ENCODE measurements at regions of chr14 and their contacts with region 1.

Region 1: GRCh38 chr14:20934148-20934762 is 21.0 kb upstream of the RNASE2 start:
- DNase-seq: no peak
- H3K4me3 ChIP-seq: no peak overlapping the region
- H3K27ac ChIP-seq: no peak overlapping the region
- H3K4me1 ChIP-seq: no peaks in the 10 kb centered on the region
- H3K27me3 ChIP-seq: no peaks in the 10 kb centered on the region
- CTCF ChIP-seq: peak; percentile 39 to 40

Region 2: GRCh38 chr14:20873370-20874177 is 60.7 kb before region 1 on chr14:
- CTCF ChIA-PET with region 1: no interaction called
- dilution Hi-C with region 1: no loop called
- in situ Hi-C with region 1: no loop called
- intact Hi-C with region 1: loop called (anchors 2 kb)
- DNase-seq: peak; percentile 31
- H3K4me3 ChIP-seq: no peak overlapping the region
- H3K27ac ChIP-seq: no peak overlapping the region
- H3K4me1 ChIP-seq: no peaks in the 10 kb centered on the region
- H3K27me3 ChIP-seq: no peaks in the 10 kb centered on the region
- CTCF ChIP-seq: peak; percentile 54 to 55